HEK293T (cell line): ENCODE measurements at regions of chr10 and their contacts with region 1.

Region 1: DNA sequence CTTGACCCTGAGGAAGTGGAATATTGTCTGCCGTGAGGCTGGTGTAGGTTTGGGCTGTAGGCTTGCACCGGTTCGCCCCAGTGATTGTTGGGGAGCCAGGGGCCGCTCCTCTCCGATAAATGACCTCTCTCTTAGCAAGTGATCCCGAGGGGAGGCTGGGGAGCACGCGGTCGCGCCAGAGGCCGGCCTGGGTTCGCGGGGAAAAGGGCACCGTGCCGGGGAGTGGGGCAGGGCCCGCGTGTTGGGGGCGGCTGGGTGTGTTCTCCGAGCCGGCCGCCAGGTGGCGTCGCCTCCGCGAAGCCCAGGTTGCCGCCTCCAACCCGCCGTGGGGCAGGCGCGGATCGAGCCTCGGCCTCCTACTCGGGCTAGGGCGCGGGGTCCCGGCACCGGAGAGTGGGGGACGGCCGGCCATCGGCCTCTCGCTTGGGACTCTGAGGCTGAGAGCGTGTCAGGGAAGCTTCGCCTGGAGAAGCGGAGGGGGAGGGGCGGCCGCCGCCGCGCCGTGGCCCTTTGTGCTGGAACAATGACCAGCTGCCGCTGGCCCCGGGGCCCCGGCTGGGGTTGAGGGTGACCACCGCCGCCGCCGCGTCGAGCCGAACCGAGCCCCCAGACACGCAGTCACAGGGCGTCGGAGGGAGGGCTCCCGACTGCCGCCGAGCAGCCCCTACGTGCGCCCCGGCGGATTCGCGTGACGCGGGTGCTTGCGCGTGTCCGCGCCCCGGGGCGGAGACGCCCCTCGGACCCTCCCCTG is 442 bp upstream of the LZTS2 start:
- DNase-seq: peak; percentile 93

Region 2: GRCh38 chr10:100878291-100878910 is 120.8 kb before region 1 on chr10:
- CTCF ChIA-PET with region 1: no interaction called
- POLR2A ChIA-PET with region 1: no interaction called
- DNase-seq: peak; percentile 87

Region 3: DNA sequence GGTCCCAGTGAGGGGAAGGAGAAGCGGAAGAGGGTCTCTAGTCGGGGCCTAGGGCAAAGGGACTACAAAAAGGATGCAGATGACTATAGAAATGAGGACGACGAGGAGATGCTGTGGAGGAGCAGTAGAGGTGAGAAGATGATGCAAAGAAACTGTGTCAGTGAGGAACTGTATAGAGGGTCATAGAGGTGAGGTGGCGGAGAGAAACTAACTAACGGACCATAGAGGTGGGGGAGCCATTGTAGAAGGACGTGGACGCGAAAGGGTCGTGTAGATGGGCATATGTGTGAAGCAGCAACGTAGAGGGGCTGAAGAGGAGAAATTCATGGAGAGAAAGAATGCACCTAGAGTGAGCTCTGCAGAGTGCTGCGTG is 11.4 kb before region 1 on chr10:
- CTCF ChIA-PET with region 1: interaction called, 4 read pairs
- POLR2A ChIA-PET with region 1: interaction called, 12 read pairs
- DNase-seq: no peak

Region 4: GRCh38 chr10:101012525-101013364 is 13.6 kb after region 1 on chr10:
- CTCF ChIA-PET with region 1: interaction called, 50 read pairs
- POLR2A ChIA-PET with region 1: interaction called, 27 read pairs
- DNase-seq: peak; percentile 82

Region 5: GRCh38 chr10:101139421-101139911 is 140.3 kb after region 1 on chr10:
- CTCF ChIA-PET with region 1: no interaction called
- POLR2A ChIA-PET with region 1: no interaction called
- DNase-seq: no peak